Activated CD8-positive, alpha-beta T cell treated with anti-CD3 and anti-CD28 coated beads for 36 hours (primary cell): ENCODE measurements at regions of chr21 and their contacts with region 1.

Region 1: GRCh38 chr21:14545906-14546480 is at the start of gene SAMSN1:
- DNase-seq: peak; percentile 86
- ATAC-seq: peak; percentile 87
- H3K4me3 Mint-ChIP-seq: peak within 1 kb of the TSS; percentile 96
- H3K27ac Mint-ChIP-seq: peak within 1 kb of the TSS; percentile 94
- H3K4me1 Mint-ChIP-seq: peaks cover 51% of the 10 kb centered on the region
- H3K27me3 Mint-ChIP-seq: no peaks in the 10 kb centered on the region
- CTCF ChIP-seq: no peak
- total RNA-seq, gene SAMSN1: 66.7 to 71.4 TPM

Region 2: DNA sequence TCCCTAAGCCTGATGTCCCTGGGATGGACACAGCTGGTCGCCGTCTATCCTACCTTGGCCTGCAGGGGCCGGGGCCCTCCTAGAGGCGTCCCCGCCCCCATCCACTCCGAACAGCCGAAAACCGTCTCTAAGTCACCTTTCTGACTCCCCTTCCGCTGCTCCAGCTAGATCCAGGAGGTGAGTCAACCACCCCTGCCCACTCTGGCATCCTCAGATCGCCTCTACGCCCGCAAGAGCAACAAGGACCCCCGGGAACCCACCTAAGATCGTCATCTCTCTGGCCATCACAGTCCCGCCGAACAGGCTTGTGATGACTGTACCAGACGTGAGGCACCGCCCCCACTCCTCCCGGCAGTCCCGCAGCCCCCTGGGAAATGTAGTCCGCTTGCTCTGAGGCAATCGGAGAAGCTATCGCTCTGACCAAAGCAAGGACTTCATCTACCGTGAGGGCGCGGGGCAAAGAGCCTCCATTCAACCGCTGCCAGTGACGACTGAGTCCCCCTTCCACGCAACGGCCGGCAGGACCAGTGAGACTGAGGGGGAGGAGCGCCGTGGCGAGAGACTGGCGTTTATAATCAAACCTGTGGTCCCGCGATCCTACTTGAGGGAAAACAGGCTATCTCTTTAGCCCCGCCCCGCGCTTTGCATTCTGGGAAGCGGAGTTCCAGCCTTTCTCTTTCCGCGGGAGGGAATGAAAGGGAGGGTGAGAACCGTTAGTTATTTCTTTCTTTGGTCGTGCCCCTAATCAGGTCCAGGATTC is 163.0 kb before region 1 on chr21 and contains the start of gene HSPA13:
- CTCF ChIA-PET with region 1: no interaction called
- POLR2A ChIA-PET with region 1: interaction called, 3 read pairs
- intact Hi-C with region 1: loop called (anchors 5 kb)
- DNase-seq: peak; percentile 100
- ATAC-seq: peak; percentile 96
- H3K4me3 Mint-ChIP-seq: peak within 1 kb of the TSS; percentile 92
- H3K27ac Mint-ChIP-seq: peak within 1 kb of the TSS; percentile 97
- H3K4me1 Mint-ChIP-seq: peaks cover 30% of the 10 kb centered on the region
- H3K27me3 Mint-ChIP-seq: no peaks in the 10 kb centered on the region
- CTCF ChIP-seq: no peak
- total RNA-seq, gene HSPA13: 37.1 to 39.8 TPM

Region 3: DNA sequence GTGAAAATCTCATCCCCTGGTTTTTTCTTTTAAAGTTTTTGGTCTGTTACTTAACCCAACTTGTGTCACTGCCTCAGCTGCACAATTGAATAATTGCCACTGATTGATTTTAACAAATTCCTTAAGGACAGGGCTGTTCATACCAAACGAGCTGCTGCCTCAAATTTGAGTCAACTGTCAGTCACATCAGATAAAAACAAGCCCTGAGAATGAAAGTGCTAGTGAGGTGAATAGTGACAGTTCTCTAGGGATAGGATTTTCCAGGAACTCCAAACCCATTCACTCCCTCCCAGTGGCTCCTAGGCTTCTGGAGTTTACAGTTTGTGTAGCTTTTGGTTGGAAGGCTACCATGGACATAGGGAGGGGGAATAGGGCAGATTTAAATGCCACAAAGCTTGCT is 79.3 kb before region 1 on chr21:
- CTCF ChIA-PET with region 1: no interaction called
- POLR2A ChIA-PET with region 1: no interaction called
- intact Hi-C with region 1: no loop called
- DNase-seq: no peak
- ATAC-seq: no peak
- H3K4me3 Mint-ChIP-seq: no peak overlapping the region
- H3K27ac Mint-ChIP-seq: no peak overlapping the region
- H3K4me1 Mint-ChIP-seq: peaks cover 3% of the 10 kb centered on the region
- H3K27me3 Mint-ChIP-seq: peaks cover 2% of the 10 kb centered on the region
- CTCF ChIP-seq: no peak

Region 4: DNA sequence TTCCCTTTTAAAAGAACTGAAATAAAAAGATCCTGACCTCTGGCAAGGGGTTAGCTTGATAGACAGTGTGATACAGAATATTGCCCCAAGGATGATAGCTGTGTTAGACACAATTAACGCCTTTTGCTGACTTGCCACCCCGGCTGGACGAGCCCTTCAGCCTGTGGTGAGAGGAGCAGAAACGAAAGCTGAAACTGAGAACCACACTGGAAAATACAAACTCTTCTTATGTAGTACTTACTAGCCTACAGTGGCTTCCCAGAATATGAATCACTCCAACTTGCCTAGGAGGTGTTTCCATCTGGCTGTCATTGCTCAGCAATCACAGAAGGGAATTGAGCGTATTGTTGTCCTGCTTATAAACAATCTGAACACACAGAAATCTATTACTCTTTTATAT is 22.8 kb before region 1 on chr21:
- CTCF ChIA-PET with region 1: interaction called, 5 read pairs
- POLR2A ChIA-PET with region 1: interaction called, 13 read pairs
- intact Hi-C with region 1: no loop called
- DNase-seq: peak; percentile 65
- ATAC-seq: peak; percentile 84
- H3K4me3 Mint-ChIP-seq: peak overlapping the region; percentile 54
- H3K27ac Mint-ChIP-seq: peak overlapping the region; percentile 86
- H3K4me1 Mint-ChIP-seq: peaks cover 61% of the 10 kb centered on the region
- H3K27me3 Mint-ChIP-seq: no peaks in the 10 kb centered on the region
- CTCF ChIP-seq: no peak

Region 5: GRCh38 chr21:14533504-14534428 is 12.2 kb before region 1 on chr21:
- CTCF ChIA-PET with region 1: interaction called, 5 read pairs
- POLR2A ChIA-PET with region 1: interaction called, 27 read pairs
- intact Hi-C with region 1: loop called (anchors 1 kb)
- DNase-seq: no peak
- ATAC-seq: peak; percentile 79
- H3K4me3 Mint-ChIP-seq: peak overlapping the region; percentile 72
- H3K27ac Mint-ChIP-seq: peak overlapping the region; percentile 99
- H3K4me1 Mint-ChIP-seq: peaks cover 78% of the 10 kb centered on the region
- H3K27me3 Mint-ChIP-seq: no peaks in the 10 kb centered on the region
- CTCF ChIP-seq: no peak

Region 6: GRCh38 chr21:14591882-14592281 is 45.9 kb after region 1 on chr21:
- CTCF ChIA-PET with region 1: interaction called, 3 read pairs
- POLR2A ChIA-PET with region 1: no interaction called
- intact Hi-C with region 1: loop called (anchors 5 kb)
- DNase-seq: peak; percentile 27
- ATAC-seq: peak; percentile 49
- H3K4me3 Mint-ChIP-seq: no peak overlapping the region
- H3K27ac Mint-ChIP-seq: peak overlapping the region; percentile 64
- H3K4me1 Mint-ChIP-seq: peaks cover 30% of the 10 kb centered on the region
- H3K27me3 Mint-ChIP-seq: no peaks in the 10 kb centered on the region
- CTCF ChIP-seq: no peak

Region 7: DNA sequence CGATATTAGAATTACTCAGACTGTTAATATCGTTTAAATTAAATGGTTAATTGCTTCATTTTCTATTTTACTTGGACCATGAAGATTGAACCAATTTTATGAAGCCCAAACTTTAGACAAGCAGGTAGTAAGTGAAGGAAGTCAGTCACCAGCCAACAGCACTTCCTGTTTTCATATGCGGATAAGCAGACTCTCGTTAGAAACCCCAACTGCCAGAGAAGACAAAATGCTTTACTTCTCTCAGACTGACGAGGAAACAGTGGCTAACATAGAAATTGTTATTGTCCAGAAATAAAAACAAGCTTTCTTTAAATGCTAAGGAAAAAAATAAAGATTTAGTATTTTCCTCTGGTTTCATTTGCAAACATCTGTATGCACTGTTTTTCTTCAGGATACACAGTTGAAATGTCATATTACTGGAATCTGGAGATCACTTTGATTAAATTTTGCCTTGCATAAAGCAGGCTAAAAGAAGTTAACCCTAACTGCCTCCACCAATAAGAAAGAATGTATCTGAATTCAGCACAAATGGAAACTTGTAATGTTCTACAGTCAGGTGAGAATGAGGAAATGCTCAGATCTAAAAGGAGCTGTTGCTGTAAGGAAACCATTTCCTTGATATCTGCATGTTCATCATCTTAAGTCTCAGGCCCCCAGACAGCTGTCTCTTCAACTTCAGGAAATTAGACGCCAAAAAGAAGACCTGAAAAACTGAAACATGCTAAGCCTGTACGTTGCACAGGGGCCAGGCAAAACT is 130.0 kb after region 1 on chr21:
- CTCF ChIA-PET with region 1: no interaction called
- POLR2A ChIA-PET with region 1: no interaction called
- intact Hi-C with region 1: loop called (anchors 5 kb)
- DNase-seq: peak; percentile 27
- ATAC-seq: peak; percentile 82
- H3K4me3 Mint-ChIP-seq: peak overlapping the region; percentile 59
- H3K27ac Mint-ChIP-seq: peak overlapping the region; percentile 97
- H3K4me1 Mint-ChIP-seq: peaks cover 41% of the 10 kb centered on the region
- H3K27me3 Mint-ChIP-seq: no peaks in the 10 kb centered on the region
- CTCF ChIP-seq: no peak

Region 8: DNA sequence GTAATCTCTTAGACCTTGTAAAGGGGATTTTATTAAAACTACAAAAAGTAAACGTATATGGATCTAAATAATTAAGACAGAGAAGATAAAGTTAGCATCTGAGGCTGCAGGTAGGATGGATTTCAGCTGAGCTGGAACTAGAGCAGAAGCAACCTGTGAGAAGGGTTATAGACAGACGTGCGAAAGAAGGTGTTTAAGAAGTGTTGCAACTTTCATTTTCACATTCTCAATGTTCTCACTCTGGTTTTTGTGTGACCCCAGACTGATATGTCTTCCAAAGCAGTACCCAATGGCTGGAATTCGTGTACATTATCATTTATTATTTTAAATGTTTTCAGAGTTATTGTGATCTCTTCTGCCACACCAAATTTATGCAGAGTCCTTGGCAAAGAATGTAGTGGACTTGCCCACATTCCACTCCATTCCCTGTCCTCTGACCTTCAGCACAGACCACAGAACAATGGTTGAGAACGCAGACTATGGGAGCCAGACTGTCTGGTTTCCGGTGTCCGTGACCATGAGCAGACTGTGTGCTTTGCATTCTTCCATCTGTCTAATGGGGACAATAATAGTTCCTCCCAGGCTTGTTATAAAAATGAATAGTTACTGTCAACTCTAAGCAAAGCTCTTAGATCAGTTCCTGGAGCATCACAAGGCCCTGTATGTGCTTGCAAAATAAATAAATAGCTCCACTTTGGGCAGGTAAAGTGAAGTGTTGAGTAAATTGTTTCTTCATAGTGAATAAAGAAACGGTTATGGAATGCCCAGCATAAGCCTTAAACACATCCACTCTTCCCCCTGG is 140.7 kb after region 1 on chr21:
- CTCF ChIA-PET with region 1: no interaction called
- POLR2A ChIA-PET with region 1: no interaction called
- intact Hi-C with region 1: no loop called
- DNase-seq: no peak
- ATAC-seq: peak; percentile 55
- H3K4me3 Mint-ChIP-seq: no peak overlapping the region
- H3K27ac Mint-ChIP-seq: peak overlapping the region; percentile 3
- H3K4me1 Mint-ChIP-seq: peaks cover 43% of the 10 kb centered on the region
- H3K27me3 Mint-ChIP-seq: no peaks in the 10 kb centered on the region
- CTCF ChIP-seq: no peak